Activated CD8-positive, alpha-beta T cell treated with anti-CD3 and anti-CD28 coated beads for 36 hours (primary cell): ENCODE measurements at regions of chr6 and their contacts with region 1.

Region 1: DNA sequence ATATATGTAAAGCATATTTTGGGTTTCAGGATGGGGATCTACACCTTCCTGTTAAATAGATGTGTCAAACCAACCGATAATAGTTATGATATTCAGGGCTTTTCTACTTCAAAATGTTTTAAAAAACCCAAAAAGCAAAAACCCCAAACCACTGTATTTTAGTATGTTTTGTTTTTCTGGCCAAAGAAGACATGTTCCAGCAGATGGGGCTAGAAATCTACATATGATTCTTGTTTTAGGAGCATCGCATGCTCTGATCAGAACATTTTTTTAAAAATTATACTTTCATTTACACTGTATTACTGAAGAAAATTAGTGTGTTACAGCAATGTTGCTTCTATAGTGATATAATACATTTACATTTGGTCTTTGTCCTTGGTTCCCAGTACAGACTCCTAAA is 11.0 kb downstream of the RMND1 start:
- DNase-seq: no peak
- ATAC-seq: no peak
- H3K4me3 Mint-ChIP-seq: no peak overlapping the region
- H3K27ac Mint-ChIP-seq: no peak overlapping the region
- H3K4me1 Mint-ChIP-seq: peaks cover 42% of the 10 kb centered on the region
- H3K27me3 Mint-ChIP-seq: no peaks in the 10 kb centered on the region
- CTCF ChIP-seq: peak; percentile 38

Region 2: GRCh38 chr6:151176911-151177770 is 263.8 kb before region 1 on chr6:
- CTCF ChIA-PET with region 1: no interaction called
- POLR2A ChIA-PET with region 1: no interaction called
- intact Hi-C with region 1: no loop called
- DNase-seq: no peak
- ATAC-seq: no peak
- H3K4me3 Mint-ChIP-seq: no peak overlapping the region
- H3K27ac Mint-ChIP-seq: no peak overlapping the region
- H3K4me1 Mint-ChIP-seq: no peaks in the 10 kb centered on the region
- H3K27me3 Mint-ChIP-seq: peaks cover 10% of the 10 kb centered on the region
- CTCF ChIP-seq: no peak

Region 3: GRCh38 chr6:151409260-151409659 is 31.7 kb before region 1 on chr6:
- CTCF ChIA-PET with region 1: interaction called, 14 read pairs
- POLR2A ChIA-PET with region 1: interaction called, 6 read pairs
- intact Hi-C with region 1: no loop called
- DNase-seq: no peak
- ATAC-seq: no peak
- H3K4me3 Mint-ChIP-seq: no peak overlapping the region
- H3K27ac Mint-ChIP-seq: peak overlapping the region; percentile 40
- H3K4me1 Mint-ChIP-seq: peaks cover 19% of the 10 kb centered on the region
- H3K27me3 Mint-ChIP-seq: no peaks in the 10 kb centered on the region
- CTCF ChIP-seq: no peak

Region 4: DNA sequence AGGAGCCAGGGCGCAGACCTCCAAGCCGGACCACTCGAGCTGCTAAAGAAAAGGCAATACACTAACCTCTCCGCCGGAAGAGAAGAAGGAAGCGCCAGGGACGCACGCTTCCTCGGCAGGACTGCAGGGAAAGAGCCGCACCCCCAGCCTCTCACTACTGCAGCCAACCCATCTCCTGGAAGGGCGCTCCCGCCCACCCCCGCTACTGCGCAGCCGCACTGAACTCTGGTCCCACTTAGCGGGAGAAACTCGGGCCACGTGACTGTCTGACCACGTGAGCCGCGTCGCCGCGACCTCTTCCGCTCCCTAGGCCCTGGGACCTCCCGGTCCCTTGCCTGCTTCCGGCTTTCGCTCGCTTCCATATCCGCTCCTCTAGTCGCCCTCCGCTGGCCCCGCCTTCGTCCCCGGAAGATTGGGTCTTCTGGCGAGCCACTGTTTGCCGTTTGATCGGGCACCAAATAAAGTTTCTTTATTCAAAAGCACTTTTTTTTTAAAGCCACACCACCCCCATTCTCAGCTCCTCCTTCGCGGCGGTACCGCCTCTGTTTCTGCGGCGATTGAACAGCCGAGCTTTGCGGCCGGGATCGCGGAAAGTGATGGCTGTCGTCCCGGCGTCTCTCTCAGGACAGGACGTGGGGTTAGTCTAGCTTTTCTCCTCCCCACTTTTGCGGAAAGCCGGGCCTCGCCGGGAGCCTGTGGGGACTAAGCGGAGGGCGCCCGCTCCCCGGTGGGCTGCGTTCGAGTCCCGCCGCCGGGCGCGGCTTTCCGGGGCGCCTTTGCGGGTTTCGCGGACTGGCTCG is 11.2 kb after region 1 on chr6 and contains the start of gene RMND1:
- CTCF ChIA-PET with region 1: interaction called, 11 read pairs
- POLR2A ChIA-PET with region 1: interaction called, 24 read pairs
- intact Hi-C with region 1: no loop called
- DNase-seq: peak; percentile 100
- ATAC-seq: peak; percentile 98
- H3K4me3 Mint-ChIP-seq: peak within 1 kb of the TSS; percentile 93
- H3K27ac Mint-ChIP-seq: peak within 1 kb of the TSS; percentile 85
- H3K4me1 Mint-ChIP-seq: peaks cover 31% of the 10 kb centered on the region
- H3K27me3 Mint-ChIP-seq: no peaks in the 10 kb centered on the region
- CTCF ChIP-seq: no peak
- total RNA-seq, gene RMND1: 19.0 to 19.7 TPM

Region 5: GRCh38 chr6:151566557-151566956 is 125.6 kb after region 1 on chr6:
- CTCF ChIA-PET with region 1: no interaction called
- POLR2A ChIA-PET with region 1: no interaction called
- intact Hi-C with region 1: no loop called
- DNase-seq: no peak
- ATAC-seq: peak; percentile 80
- H3K4me3 Mint-ChIP-seq: no peak overlapping the region
- H3K27ac Mint-ChIP-seq: no peak overlapping the region
- H3K4me1 Mint-ChIP-seq: peaks cover 4% of the 10 kb centered on the region
- H3K27me3 Mint-ChIP-seq: no peaks in the 10 kb centered on the region
- CTCF ChIP-seq: no peak

Region 6: DNA sequence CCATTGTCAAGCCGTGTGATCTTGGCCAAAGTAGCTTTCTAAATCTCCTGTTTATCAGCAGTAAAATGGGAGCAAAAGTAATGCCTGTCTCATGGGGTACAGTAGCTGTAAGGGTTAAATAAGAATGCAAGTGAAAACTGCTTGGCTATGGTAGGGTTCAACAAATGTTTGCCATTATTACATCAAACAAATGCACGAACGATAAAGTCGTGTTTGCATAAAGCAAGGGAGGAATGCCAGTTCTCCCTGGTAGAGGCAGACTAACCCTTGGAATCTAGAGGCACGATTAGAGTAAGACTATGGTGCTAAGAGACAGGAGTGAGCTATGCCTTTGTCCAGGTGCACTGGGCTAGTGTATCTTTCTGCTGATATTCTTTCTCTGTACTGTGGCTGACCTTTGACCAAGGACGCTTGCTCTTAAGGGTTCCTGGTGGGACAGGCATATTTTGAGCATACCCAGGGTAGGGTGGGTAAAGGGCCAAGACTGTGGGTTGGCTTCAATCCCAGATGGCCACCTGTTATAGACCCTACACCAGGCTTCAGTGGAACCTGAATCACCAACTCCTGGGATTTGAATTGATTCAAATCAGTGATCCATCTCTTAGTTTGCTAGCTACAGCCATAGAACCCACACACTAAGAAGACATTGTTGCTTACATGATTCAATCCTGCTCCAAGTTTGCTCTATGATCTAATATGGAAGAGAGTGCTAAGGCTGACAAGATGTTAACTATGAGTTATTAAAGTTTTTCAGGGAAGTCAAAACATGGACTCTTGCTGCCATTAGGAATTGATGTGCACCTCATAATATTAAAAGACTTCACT is 192.8 kb after region 1 on chr6:
- CTCF ChIA-PET with region 1: no interaction called
- POLR2A ChIA-PET with region 1: no interaction called
- intact Hi-C with region 1: no loop called
- DNase-seq: no peak
- ATAC-seq: peak; percentile 34
- H3K4me3 Mint-ChIP-seq: no peak overlapping the region
- H3K27ac Mint-ChIP-seq: no peak overlapping the region
- H3K4me1 Mint-ChIP-seq: peaks cover 3% of the 10 kb centered on the region
- H3K27me3 Mint-ChIP-seq: peaks cover 10% of the 10 kb centered on the region
- CTCF ChIP-seq: no peak